Panc1 (cell line): ENCODE measurements at regions of chr1 and their contacts with region 1.

Region 1: GRCh38 chr1:25099343-25099951 is 132.9 kb downstream of the SYF2 start:
- DNase-seq: no peak
- ATAC-seq: no peak
- H3K4me3 ChIP-seq: no peak overlapping the region
- H3K27ac ChIP-seq: no peak overlapping the region
- H3K4me1 ChIP-seq: 0 out of 2 replicates have a peak, but pooled peaks cover 3% of the 10 kb centered on the region
- H3K27me3 ChIP-seq: no peaks in the 10 kb centered on the region
- CTCF ChIP-seq: no peak

Region 2: GRCh38 chr1:24929398-24930114 is 169.9 kb before region 1 on chr1:
- CTCF ChIA-PET with region 1: interaction called, 3 read pairs
- POLR2A ChIA-PET with region 1: no interaction called
- in situ Hi-C with region 1: no loop called
- intact Hi-C with region 1: loop called (anchors 10 kb)
- DNase-seq: no peak
- ATAC-seq: peak; percentile 29
- H3K4me3 ChIP-seq: no peak overlapping the region
- H3K27ac ChIP-seq: no peak overlapping the region
- H3K4me1 ChIP-seq: no peaks in the 10 kb centered on the region; the same call in 1 of the 2 replicates
- H3K27me3 ChIP-seq: no peaks in the 10 kb centered on the region; the same call in 1 of the 2 replicates
- CTCF ChIP-seq: no peak

Region 3: GRCh38 chr1:25037174-25038074 is 62.0 kb before region 1 on chr1:
- CTCF ChIA-PET with region 1: no interaction called
- POLR2A ChIA-PET with region 1: no interaction called
- in situ Hi-C with region 1: no loop called
- intact Hi-C with region 1: loop called (anchors 5 kb)
- DNase-seq: peak; percentile 13
- ATAC-seq: peak; percentile 61
- H3K4me3 ChIP-seq: no peak overlapping the region
- H3K27ac ChIP-seq: no peak overlapping the region
- H3K4me1 ChIP-seq: no peaks in the 10 kb centered on the region
- H3K27me3 ChIP-seq: no peaks in the 10 kb centered on the region
- CTCF ChIP-seq: peak; percentile 83

Region 4: DNA sequence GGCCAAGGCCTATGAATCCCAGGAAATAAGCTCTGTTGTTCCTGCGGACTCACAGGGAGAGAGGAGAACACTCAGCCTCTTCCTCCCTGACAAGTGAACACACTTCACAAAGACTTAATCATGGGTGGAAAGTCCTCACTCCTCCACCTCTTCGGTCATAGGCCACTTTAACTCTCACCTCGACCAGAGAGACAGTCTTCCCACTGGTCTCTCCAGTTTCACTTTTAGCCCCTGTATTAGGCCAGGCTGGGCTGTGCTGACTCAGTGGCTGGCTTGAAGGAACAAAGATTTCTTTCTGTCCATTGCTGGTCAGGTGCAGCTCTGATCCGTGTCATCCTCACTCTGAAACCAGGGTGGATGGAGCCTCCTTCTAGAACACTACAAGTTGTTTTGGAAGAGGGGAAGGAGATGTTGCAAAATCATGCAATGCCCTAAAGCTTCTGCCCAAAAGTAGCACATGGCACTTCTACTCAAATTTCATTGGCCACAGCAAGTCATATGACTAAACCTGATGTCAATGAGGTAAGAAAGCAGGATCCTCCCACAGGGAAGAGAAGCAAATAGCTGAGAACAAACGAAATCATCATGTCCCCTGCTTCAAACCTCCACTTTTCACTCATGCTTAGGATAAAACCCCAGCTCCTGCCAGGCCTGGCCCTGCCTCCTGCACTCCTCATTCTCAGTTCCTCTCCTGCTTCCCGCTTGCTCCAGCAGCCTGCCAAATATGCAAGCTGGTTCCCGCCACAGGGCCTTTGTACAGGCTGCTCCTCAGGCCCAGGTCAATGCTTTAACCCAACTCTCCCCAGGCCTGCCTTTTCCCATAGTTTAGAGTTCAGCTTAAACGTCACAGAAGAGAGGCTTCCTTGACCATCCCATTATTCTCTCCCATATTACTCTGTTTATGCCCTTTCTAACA is 18.9 kb before region 1 on chr1:
- CTCF ChIA-PET with region 1: interaction called, 3 read pairs
- POLR2A ChIA-PET with region 1: interaction called, 10 read pairs
- in situ Hi-C with region 1: no loop called
- intact Hi-C with region 1: no loop called
- DNase-seq: no peak
- ATAC-seq: no peak
- H3K4me3 ChIP-seq: no peak overlapping the region
- H3K27ac ChIP-seq: no peak overlapping the region
- H3K4me1 ChIP-seq: no peaks in the 10 kb centered on the region
- H3K27me3 ChIP-seq: no peaks in the 10 kb centered on the region
- CTCF ChIP-seq: no peak